ENCODE measurements at regions of chr3 and their contacts with region 1.

Region 1: DNA sequence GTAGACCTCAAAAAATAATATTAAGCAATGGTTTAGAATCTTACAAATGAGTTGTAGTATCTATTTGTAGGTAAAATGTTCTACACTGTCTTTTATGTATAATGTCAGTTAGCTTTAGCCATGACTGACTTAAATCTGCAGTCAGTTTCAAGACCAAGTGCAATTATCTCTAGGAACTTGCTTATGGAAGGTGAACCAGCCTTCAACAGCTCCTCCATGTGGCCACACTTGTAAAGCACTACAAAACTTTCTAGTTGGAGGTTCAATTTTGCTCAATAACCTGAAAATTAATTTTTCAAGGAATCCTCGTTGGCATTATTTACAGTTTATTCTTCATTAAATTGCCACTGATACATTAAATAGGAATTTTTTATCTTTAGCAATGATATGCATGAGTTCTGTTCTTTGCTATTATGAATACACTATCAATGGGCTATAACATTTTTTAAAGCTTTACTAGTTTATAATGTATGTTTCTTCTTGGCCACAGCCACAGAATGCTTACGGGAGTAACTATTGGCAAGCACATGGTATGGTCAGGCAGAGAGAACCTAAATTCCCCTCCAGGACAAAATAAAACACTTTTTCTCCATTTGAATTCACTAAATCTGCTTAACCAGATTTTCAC is 315.3 kb upstream of the UBE2E2 start:
- DNase-seq: peak; percentile 56
- H3K4me3 Mint-ChIP-seq: no peak overlapping the region
- H3K27ac Mint-ChIP-seq: no peak overlapping the region
- H3K4me1 Mint-ChIP-seq: no peaks in the 10 kb centered on the region
- H3K27me3 Mint-ChIP-seq: peaks cover 22% of the 10 kb centered on the region
- CTCF ChIP-seq: peak; percentile 79

Region 2: GRCh38 chr3:22565393-22565792 is 322.4 kb before region 1 on chr3:
- CTCF ChIA-PET with region 1: interaction called, 56 read pairs
- POLR2A ChIA-PET with region 1: no interaction called
- intact Hi-C with region 1: loop called (anchors 1 kb)
- DNase-seq: no peak
- H3K4me3 Mint-ChIP-seq: no peak overlapping the region
- H3K27ac Mint-ChIP-seq: no peak overlapping the region
- H3K4me1 Mint-ChIP-seq: peaks cover 5% of the 10 kb centered on the region
- H3K27me3 Mint-ChIP-seq: no peaks in the 10 kb centered on the region
- CTCF ChIP-seq: no peak

Region 3: DNA sequence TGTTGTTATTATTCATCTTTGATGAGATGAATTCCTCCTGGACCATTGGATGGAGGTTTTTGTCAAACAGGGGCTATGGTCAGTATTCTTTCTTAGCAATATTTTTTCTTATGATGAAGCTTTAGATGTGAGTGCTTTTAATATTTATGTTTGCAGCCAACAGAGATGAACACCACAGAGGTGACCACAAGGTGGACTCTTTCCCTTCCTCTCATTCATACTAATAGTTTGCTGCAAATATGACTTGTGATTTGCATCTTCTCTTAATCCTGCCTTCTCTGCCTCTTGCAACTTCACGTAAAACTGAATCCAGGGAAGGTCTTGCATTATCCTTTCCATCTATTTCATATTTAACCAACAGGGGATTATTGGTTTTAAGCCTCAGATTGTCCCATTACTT is 157.8 kb before region 1 on chr3:
- CTCF ChIA-PET with region 1: interaction called, 53 read pairs
- POLR2A ChIA-PET with region 1: interaction called, 4 read pairs
- intact Hi-C with region 1: loop called (anchors 1 kb)
- DNase-seq: peak; percentile 35
- H3K4me3 Mint-ChIP-seq: no peak overlapping the region
- H3K27ac Mint-ChIP-seq: no peak overlapping the region
- H3K4me1 Mint-ChIP-seq: peaks cover 18% of the 10 kb centered on the region
- H3K27me3 Mint-ChIP-seq: no peaks in the 10 kb centered on the region
- CTCF ChIP-seq: peak; percentile 45

Region 4: DNA sequence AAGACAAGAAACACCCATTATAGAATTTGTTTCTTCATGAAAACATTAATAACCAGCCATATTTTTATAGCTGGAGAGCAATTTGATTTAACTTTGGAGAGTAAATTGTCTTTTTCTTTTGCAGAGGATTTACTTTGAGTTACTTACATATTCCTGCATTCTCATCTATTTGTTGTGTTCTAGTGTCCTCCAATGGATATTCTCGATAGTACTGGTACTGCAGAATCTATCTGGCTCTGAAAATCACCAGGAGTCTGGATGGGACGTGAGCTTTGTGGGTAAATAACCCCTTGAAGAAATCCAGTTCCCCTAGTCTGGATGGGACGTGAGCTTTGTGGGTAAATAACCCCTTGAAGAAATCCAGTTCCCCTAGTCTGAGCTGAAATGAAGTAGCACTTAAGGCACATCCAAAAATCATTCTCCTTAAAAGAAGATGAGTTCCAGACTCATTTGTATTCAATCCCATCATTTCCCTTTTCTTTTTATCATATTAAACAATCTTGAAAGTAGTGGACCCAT is 21.3 kb after region 1 on chr3:
- CTCF ChIA-PET with region 1: interaction called, 10 read pairs
- POLR2A ChIA-PET with region 1: no interaction called
- intact Hi-C with region 1: no loop called
- DNase-seq: no peak
- H3K4me3 Mint-ChIP-seq: no peak overlapping the region
- H3K27ac Mint-ChIP-seq: no peak overlapping the region
- H3K4me1 Mint-ChIP-seq: no peaks in the 10 kb centered on the region
- H3K27me3 Mint-ChIP-seq: no peaks in the 10 kb centered on the region
- CTCF ChIP-seq: no peak

Measured in MCF 10A (cell line).